Posterior vena cava (tissue), 2 donors: ENCODE measurements at regions of chr10 and their contacts with region 1.

Region 1: DNA sequence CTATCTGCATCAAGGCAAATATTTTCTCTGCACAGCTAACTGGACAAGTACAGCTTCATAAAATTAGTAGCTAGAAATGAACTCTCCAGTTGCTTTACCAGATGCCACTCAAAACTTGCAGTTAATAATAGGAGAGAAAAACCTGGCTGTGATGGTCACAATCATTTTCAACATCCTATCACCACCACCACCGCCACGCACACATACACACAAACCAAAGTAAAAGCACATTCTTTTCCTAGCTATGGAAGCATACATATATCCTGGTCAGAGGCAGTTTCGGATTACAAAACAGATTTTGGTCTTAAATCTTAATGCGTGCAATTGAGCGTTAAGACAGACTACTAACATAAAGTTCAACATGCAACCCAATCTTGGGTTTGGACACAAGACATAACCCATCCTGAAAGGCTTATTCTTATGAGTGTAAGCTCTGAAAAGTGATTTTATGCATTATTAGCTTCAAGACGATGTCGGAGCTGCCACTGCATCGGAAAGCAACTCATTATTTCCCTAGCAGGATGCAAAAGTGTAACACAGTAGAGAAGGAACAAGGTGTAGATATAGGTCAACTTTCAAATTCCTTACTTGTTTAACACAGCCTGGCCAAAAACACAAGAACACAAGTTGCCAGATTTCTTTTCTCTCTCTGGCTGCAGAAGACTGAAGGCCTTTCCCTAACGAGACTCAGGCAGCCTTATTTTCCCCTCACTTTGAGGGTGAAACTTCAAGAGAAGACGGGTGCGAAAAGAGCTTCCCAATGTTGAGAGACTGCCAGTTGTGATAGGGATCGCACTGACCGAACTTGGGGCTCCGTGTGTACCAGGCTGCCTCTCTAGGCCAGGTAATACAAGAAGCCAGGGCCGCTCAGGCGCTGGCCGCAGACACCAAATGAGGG is 1.2 kb downstream of the CACUL1 start:
- DNase-seq: no peak

Region 2: GRCh38 chr10:118383699-118384098 is 369.9 kb before region 1 on chr10:
- intact Hi-C with region 1: no loop called
- DNase-seq: no peak

Region 3: GRCh38 chr10:118974951-118975350 is 221.4 kb after region 1 on chr10:
- intact Hi-C with region 1: loop called in 1 of 2 experiments (anchors 2 kb)
- DNase-seq: no peak